GM12878 (cell line): ENCODE measurements at regions of chr2 and their contacts with region 1.

Region 1: DNA sequence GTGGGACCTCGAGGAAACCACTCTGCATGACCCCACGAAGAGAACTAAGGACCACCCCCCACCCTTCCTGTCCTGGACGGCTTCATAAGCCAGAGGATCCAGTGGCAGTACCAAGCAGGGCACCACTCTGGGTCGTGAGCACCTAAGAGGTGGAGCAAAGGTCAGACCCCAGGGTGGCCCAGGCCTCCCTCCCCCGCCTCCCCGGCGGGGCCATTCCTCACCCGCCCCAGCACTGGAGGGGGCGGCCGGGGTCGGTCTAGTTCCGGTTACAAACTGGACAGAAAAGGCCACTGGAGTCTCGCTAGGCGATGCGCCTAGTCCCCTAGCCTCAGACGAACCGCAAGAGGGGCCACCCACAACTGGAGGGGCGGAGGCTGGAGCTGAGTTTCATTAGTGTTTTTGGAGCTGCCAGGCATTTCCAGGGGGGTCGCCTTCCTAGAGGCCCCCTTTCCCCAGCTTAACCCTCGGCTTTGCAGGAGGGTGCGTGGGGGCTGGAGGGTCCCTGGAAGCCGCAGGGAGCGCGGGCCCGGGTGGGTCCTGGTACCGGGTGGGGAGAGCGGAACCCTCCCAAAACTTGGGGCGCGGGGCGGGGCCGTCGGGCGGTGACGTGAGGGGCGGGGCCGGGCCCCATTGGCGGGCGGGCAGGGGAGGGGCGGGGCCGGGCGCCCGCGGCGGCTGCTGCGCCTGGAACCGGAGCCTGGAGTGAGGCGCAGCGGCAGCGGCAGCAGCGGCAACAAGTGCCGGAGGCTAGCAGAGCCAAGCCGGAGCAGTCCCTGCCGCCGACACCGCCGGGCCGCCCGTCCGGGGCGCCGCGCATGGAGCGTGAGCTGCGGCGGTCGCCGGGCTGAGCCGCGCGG is at the start of gene B3GNT2:
- DNase-seq: no peak
- ATAC-seq: peak; percentile 63
- H3K4me3 ChIP-seq: peak within 1 kb of the TSS; percentile 86
- H3K27ac ChIP-seq: peak within 1 kb of the TSS; percentile 87
- H3K4me1 ChIP-seq: peaks cover 9% of the 10 kb centered on the region
- H3K27me3 ChIP-seq: no peaks in the 10 kb centered on the region
- CTCF ChIP-seq: no peak
- EP300 ChIP-seq: no peak
- POLR2A ChIP-seq: peak; percentile 91
- RAD21 ChIP-seq: no peak
- polyA plus RNA-seq, gene B3GNT2: 19.7 to 36.5 TPM

Region 2: DNA sequence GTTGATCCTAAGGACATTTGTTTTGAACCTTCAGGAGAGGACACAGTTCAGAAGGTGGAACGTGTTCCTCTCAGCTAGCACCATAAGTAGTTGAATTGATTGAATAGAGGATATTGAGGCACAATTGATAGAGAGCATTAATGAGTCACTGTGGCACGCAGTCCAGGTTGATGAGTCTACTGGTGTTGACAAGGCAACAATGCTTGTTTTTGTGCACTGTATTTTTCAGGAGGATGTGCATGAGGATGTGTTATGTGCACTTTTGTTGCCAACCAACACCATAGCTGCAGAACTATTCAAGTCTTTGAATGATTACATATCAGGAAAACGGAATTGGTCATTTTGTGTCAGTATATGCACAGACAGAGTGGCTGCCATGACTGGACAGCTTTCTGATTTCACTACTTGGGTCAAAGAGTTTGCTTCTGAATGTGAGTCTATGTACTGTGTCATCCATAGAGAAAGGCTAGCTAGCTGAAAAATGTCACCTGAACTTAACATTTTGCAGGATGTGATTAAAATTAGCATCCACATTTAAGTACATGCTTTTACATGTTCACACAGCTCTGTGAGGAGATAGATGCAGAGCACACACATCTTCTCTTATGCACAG is 139.8 kb before region 1 on chr2:
- CTCF ChIA-PET with region 1: interaction called, 4 read pairs
- POLR2A ChIA-PET with region 1: no interaction called
- RAD21 ChIA-PET with region 1: interaction called, 3 read pairs
- SMC1A ChIA-PET with region 1: interaction called, 12 read pairs
- in situ Hi-C with region 1: no loop called
- intact Hi-C with region 1: loop called (anchors 10 kb)
- DNase-seq: no peak
- ATAC-seq: peak; percentile 17; the same call in 2 of the 3 replicates
- H3K4me3 ChIP-seq: no peak overlapping the region
- H3K27ac ChIP-seq: no peak overlapping the region
- H3K4me1 ChIP-seq: peaks cover 18% of the 10 kb centered on the region
- H3K27me3 ChIP-seq: no peaks in the 10 kb centered on the region
- CTCF ChIP-seq: no peak
- EP300 ChIP-seq: no peak
- POLR2A ChIP-seq: no peak
- RAD21 ChIP-seq: no peak

Region 3: GRCh38 chr2:62065243-62065642 is 130.4 kb before region 1 on chr2:
- CTCF ChIA-PET with region 1: no interaction called
- POLR2A ChIA-PET with region 1: interaction called, 3 read pairs
- RAD21 ChIA-PET with region 1: interaction called, 5 read pairs
- SMC1A ChIA-PET with region 1: interaction called, 12 read pairs
- in situ Hi-C with region 1: no loop called
- intact Hi-C with region 1: loop called (anchors 10 kb)
- DNase-seq: no peak
- ATAC-seq: peak; percentile 56
- H3K4me3 ChIP-seq: peak overlapping the region; percentile 11; the same call in 1 of the 2 replicates
- H3K27ac ChIP-seq: peak overlapping the region; percentile 81
- H3K4me1 ChIP-seq: peaks cover 37% of the 10 kb centered on the region
- H3K27me3 ChIP-seq: no peaks in the 10 kb centered on the region
- CTCF ChIP-seq: no peak
- EP300 ChIP-seq: no peak
- POLR2A ChIP-seq: no peak
- RAD21 ChIP-seq: no peak

Region 4: DNA sequence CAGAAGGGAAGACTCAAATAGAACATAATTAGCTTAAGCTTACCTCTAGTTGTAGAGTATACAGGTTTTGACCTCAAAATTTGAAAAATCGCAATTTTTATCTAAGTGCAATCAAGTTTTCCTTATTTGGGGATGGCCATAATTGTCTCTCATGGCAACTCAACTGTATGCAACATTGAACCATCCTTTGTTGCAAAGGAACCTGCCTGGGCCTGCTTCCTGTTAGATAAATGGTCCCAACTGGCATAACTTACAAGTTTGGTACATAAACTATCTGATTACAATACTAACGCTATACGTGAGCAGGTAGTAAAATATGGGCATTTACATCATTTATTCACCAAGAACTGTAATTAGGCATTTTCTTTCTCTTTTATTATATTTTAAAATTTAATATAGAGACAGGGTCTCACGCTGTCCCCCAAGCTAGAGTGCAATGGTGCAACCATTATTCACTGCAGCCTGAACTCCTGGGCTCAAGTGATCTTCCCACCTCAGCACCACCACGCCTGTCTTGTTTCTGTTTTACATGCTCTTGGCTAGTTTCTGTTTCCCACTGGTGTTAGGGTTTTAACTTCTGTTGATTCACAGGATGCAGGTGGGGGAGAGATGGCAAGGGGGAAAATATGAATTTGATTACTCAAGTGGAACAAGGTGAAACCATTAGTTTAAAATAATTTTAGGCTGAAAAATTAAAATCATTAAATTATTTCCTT is 55.1 kb before region 1 on chr2:
- CTCF ChIA-PET with region 1: interaction called, 7 read pairs
- POLR2A ChIA-PET with region 1: interaction called, 20 read pairs
- RAD21 ChIA-PET with region 1: interaction called, 63 read pairs
- SMC1A ChIA-PET with region 1: interaction called, 91 read pairs
- in situ Hi-C with region 1: no loop called
- intact Hi-C with region 1: loop called (anchors 2 kb)
- DNase-seq: peak; percentile 85
- ATAC-seq: peak; percentile 68
- H3K4me3 ChIP-seq: no peak overlapping the region
- H3K27ac ChIP-seq: peak overlapping the region; percentile 90
- H3K4me1 ChIP-seq: peaks cover 62% of the 10 kb centered on the region
- H3K27me3 ChIP-seq: no peaks in the 10 kb centered on the region
- CTCF ChIP-seq: no peak
- EP300 ChIP-seq: peak in 1 of 2 experiments; percentile 45; a peak in 1 of 4 replicates
- POLR2A ChIP-seq: no peak
- RAD21 ChIP-seq: peak; percentile 29; the same call in 1 of the 2 replicates

Region 5: GRCh38 chr2:62216616-62217015 is 21.0 kb after region 1 on chr2:
- CTCF ChIA-PET with region 1: interaction called, 6 read pairs
- POLR2A ChIA-PET with region 1: interaction called, 17 read pairs
- RAD21 ChIA-PET with region 1: interaction called, 41 read pairs
- SMC1A ChIA-PET with region 1: interaction called, 61 read pairs
- in situ Hi-C with region 1: no loop called
- intact Hi-C with region 1: no loop called
- DNase-seq: no peak
- ATAC-seq: no peak
- H3K4me3 ChIP-seq: no peak overlapping the region
- H3K27ac ChIP-seq: no peak overlapping the region
- H3K4me1 ChIP-seq: peaks cover 45% of the 10 kb centered on the region
- H3K27me3 ChIP-seq: no peaks in the 10 kb centered on the region
- CTCF ChIP-seq: no peak
- EP300 ChIP-seq: no peak
- POLR2A ChIP-seq: no peak
- RAD21 ChIP-seq: no peak

Region 6: GRCh38 chr2:62641410-62641843 is 445.8 kb after region 1 on chr2:
- CTCF ChIA-PET with region 1: no interaction called
- POLR2A ChIA-PET with region 1: no interaction called
- RAD21 ChIA-PET with region 1: no interaction called
- SMC1A ChIA-PET with region 1: no interaction called
- in situ Hi-C with region 1: no loop called
- intact Hi-C with region 1: no loop called
- DNase-seq: no peak
- ATAC-seq: no peak
- H3K4me3 ChIP-seq: no peak overlapping the region
- H3K27ac ChIP-seq: no peak overlapping the region
- H3K4me1 ChIP-seq: no peaks in the 10 kb centered on the region
- H3K27me3 ChIP-seq: no peaks in the 10 kb centered on the region; a peak in 1 of 4 replicates
- CTCF ChIP-seq: no peak
- EP300 ChIP-seq: no peak
- POLR2A ChIP-seq: no peak
- RAD21 ChIP-seq: no peak